AG04450 (cell line): ENCODE measurements at regions of chr16 and their contacts with region 1.

Region 1: GRCh38 chr16:30091474-30092372 is at the start of gene TBX6:
- DNase-seq: peak; percentile 54
- H3K4me3 ChIP-seq: peak within 1 kb of the TSS; percentile 56
- H3K27ac ChIP-seq: peak within 1 kb of the TSS; percentile 47
- H3K27me3 ChIP-seq: no peaks in the 10 kb centered on the region
- CTCF ChIP-seq: peak; percentile 74
- polyA plus RNA-seq, gene TBX6: not detected in 2 replicates

Region 2: DNA sequence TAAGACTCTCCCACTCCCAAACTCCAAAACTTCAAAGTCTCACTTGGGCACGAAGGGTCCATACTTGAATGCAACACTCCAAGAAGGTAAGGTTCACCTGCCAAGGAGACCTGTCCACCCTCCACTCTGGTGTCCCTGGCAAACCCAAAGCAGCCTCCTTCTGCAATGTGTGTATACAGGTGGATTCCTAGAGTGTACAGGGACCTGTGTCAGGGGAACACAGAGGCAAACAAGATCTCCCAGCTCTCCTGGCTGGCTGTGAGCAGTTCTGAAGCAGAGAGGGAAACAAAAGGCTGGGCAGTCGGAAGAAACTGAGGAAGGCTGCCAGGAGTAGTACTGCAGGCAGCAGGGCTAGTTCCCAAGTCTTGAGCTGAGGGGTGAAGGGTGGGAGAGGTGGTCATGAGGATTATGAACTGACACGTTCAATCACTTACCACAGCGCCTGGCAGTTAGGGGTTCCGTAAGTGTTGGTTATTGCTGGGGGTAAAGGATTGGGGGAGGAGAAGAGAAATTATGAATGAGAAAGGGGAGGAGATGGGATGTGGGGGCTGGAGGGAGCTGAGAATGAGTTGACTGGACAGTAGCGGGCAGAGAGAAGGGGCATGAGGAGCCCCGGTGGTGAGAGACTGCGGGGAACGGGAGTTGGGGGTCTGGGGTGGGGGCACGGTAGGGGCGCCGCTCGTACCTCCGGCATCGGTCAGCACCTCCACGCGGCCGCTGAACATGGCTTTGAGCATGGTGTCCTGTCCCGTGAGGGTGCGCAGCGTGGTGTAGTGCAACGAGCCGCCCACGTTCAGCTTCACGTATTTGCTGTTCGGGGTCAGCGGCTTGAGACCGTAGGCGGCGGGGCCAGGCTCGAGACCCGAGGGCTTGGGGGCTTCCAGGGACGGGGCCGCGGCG is 166.4 kb before region 1 on chr16:
- CTCF ChIA-PET with region 1: no interaction called
- POLR2A ChIA-PET with region 1: no interaction called
- DNase-seq: no peak
- H3K4me3 ChIP-seq: peak overlapping the region; percentile 96
- H3K27ac ChIP-seq: peak overlapping the region; percentile 31
- H3K27me3 ChIP-seq: no peaks in the 10 kb centered on the region
- CTCF ChIP-seq: no peak

Region 3: DNA sequence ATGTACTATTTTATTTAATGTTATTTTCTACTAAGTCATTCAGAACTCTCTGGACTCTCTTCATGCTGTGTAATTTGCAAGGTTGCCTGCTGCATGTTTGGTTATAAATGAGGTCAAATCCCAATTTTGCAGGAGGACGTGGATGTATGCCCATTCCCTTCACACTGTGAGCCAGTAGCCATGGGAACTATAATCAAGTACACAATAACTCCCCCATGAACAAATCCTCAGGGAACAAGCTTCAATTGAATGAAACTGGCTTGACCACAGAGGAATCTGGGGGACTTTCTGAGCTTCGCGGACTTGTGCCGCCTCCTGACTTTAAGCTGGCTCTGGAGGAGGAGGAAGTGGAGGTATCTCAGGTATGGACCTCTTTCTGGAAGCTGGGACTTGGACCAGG is 151.1 kb before region 1 on chr16:
- CTCF ChIA-PET with region 1: no interaction called
- POLR2A ChIA-PET with region 1: no interaction called
- DNase-seq: no peak
- H3K4me3 ChIP-seq: no peak overlapping the region
- H3K27ac ChIP-seq: no peak overlapping the region
- H3K27me3 ChIP-seq: no peaks in the 10 kb centered on the region
- CTCF ChIP-seq: no peak

Region 4: GRCh38 chr16:29994600-29995323 is 97.0 kb before region 1 on chr16:
- CTCF ChIA-PET with region 1: no interaction called
- POLR2A ChIA-PET with region 1: no interaction called
- DNase-seq: no peak
- H3K4me3 ChIP-seq: peak overlapping the region; percentile 95
- H3K27ac ChIP-seq: peak overlapping the region; percentile 21
- H3K27me3 ChIP-seq: no peaks in the 10 kb centered on the region
- CTCF ChIP-seq: no peak

Region 5: DNA sequence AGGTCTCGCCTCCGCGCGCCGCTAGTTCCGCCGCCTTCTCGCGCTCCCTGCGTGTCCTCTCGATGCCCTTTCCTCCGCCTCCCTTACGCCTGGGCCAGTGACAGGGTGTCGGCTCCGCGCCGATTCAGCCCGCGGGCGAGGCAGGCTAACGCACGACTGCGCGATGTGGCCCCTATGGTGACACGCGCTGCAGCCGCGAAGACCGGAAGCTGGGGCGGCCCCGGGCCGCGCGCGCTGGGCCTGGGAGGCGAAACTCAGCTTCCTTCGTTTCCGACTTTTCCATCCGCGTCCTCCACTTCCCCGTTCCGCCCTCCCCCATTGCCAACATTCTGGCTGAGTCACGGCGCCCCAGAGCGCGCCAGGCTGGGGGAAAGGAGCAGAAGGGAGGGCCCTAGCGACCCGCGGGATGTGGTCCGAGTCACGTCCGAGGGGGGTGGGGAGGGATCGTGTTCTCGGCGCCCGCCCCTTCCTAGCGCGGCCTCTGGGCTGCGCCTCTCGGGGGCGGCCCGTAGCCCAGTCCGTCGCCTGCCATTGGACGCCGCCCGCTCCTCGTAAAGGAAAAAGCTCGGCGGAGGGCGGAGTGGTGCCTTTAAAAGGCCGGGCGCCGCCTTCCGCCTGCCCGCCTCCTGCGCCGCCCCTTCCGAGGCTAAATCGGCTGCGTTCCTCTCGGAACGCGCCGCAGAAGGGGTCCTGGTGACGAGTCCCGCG is 26.4 kb before region 1 on chr16 and contains the start of gene ALDOA:
- CTCF ChIA-PET with region 1: no interaction called
- POLR2A ChIA-PET with region 1: interaction called, 26 read pairs
- DNase-seq: peak; percentile 98
- H3K4me3 ChIP-seq: peak within 1 kb of the TSS; percentile 97
- H3K27ac ChIP-seq: peak within 1 kb of the TSS; percentile 98
- H3K27me3 ChIP-seq: no peaks in the 10 kb centered on the region
- CTCF ChIP-seq: no peak
- polyA plus RNA-seq, gene ALDOA: 631 and 806 TPM in 2 replicates

Region 6: GRCh38 chr16:30075507-30076275 is 16.0 kb before region 1 on chr16 and contains the start of gene PPP4C:
- CTCF ChIA-PET with region 1: interaction called, 12 read pairs
- POLR2A ChIA-PET with region 1: interaction called, 8 read pairs
- DNase-seq: peak; percentile 66
- H3K4me3 ChIP-seq: peak within 1 kb of the TSS; percentile 99
- H3K27ac ChIP-seq: peak within 1 kb of the TSS; percentile 81
- H3K27me3 ChIP-seq: no peaks in the 10 kb centered on the region
- CTCF ChIP-seq: 0 out of 2 replicates have a peak, but pooled peaks have one; percentile 8
- polyA plus RNA-seq, gene PPP4C: 112 and 140 TPM in 2 replicates

Region 7: DNA sequence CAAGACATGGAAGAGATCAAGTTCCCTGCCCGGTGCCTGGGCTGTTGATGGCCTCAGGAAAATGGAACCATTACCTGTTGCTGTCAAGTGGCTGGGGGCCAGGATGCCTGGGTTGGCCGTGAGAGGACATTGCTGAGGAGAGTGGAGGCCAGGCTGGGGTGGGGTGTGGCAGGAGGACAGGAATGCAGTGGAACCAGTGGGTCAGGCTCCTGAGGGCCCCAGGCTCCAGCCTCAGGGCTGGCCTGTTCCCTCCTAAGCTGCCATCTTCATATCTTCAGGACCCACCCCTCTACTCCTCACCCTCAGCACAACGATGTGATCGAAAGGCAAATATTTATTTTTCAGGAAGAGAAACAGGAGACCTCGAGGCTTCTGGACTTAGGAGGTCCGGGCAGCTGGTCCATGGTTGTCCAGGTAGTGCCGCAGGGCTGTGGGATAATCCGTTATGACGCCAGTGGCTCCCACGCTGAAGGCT is 12.8 kb after region 1 on chr16:
- CTCF ChIA-PET with region 1: interaction called, 13 read pairs
- POLR2A ChIA-PET with region 1: interaction called, 7 read pairs
- DNase-seq: no peak
- H3K4me3 ChIP-seq: no peak overlapping the region
- H3K27ac ChIP-seq: no peak overlapping the region
- H3K27me3 ChIP-seq: no peaks in the 10 kb centered on the region
- CTCF ChIP-seq: no peak